ENCODE measurements at regions of chr17 and their contacts with region 1.

Region 1: DNA sequence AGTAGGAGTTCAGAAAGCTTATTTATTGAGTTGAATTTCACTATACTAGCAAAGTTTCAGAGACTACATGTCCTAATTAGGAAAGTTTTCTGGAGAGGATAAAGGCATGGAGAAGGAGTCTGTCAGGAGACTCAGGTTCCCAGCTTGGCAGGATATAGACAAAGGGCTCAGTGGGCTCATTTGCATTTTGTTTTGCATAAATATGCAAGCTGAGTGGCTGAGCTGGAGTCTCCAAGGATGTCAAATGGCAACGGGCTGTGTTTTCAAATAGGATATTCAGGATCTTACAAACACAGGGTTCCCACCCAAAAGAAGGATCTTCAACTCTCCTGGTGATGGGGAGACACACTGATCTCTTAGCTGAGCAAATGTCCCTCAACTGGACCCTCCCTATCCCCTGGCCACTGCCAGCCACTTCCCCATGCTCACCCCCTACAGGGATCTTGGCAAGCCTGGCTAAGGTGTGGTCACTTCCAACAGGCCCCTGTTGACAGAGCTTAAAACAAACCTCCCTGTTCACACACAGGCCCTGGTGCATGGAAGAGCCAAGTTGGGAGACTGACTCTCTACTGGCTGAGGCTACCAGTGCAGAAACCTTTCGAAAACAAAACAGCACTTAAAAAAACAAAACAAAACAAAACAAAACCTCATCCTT is 61.6 kb downstream of the SOX9 start:
- DNase-seq: no peak
- ATAC-seq: no peak
- H3K4me3 Mint-ChIP-seq: no peak overlapping the region
- H3K27ac Mint-ChIP-seq: no peak overlapping the region
- H3K4me1 Mint-ChIP-seq: no peaks in the 10 kb centered on the region
- H3K27me3 Mint-ChIP-seq: no peaks in the 10 kb centered on the region

Region 2: DNA sequence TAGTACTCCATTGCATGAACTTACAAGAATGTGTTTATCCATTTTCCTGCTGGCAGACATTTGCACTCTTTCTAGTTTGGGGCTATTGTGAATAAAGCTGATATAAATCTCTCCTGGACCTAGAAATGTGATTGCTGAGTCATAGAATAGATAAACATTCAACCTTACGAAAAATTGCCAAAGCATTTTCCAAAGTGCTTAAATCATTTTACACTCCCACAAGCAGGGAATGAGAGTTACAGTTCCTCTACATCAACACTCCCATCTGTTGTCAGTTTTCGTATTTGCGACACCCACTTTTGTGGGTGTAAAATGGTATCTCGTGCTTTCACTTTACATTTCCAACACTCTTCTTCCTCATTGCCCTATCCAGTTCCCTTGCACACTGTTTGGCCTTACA is 47.8 kb before region 1 on chr17:
- CTCF ChIA-PET with region 1: no interaction called
- POLR2A ChIA-PET with region 1: no interaction called
- intact Hi-C with region 1: loop called in 1 of 2 experiments (anchors 5 kb)
- DNase-seq: no peak
- ATAC-seq: no peak
- H3K4me3 Mint-ChIP-seq: no peak overlapping the region
- H3K27ac Mint-ChIP-seq: no peak overlapping the region
- H3K4me1 Mint-ChIP-seq: no peaks in the 10 kb centered on the region
- H3K27me3 Mint-ChIP-seq: peaks cover 11% of the 10 kb centered on the region

Region 3: GRCh38 chr17:72967977-72968585 is 785.7 kb after region 1 on chr17:
- CTCF ChIA-PET with region 1: no interaction called
- POLR2A ChIA-PET with region 1: no interaction called
- intact Hi-C with region 1: no loop called
- DNase-seq: no peak
- ATAC-seq: no peak
- H3K4me3 Mint-ChIP-seq: no peak overlapping the region
- H3K27ac Mint-ChIP-seq: no peak overlapping the region
- H3K4me1 Mint-ChIP-seq: no peaks in the 10 kb centered on the region
- H3K27me3 Mint-ChIP-seq: no peaks in the 10 kb centered on the region